Endothelial cell of umbilical vein (primary cell): ENCODE measurements at regions of chr9 and their contacts with region 1.

Region 1: DNA sequence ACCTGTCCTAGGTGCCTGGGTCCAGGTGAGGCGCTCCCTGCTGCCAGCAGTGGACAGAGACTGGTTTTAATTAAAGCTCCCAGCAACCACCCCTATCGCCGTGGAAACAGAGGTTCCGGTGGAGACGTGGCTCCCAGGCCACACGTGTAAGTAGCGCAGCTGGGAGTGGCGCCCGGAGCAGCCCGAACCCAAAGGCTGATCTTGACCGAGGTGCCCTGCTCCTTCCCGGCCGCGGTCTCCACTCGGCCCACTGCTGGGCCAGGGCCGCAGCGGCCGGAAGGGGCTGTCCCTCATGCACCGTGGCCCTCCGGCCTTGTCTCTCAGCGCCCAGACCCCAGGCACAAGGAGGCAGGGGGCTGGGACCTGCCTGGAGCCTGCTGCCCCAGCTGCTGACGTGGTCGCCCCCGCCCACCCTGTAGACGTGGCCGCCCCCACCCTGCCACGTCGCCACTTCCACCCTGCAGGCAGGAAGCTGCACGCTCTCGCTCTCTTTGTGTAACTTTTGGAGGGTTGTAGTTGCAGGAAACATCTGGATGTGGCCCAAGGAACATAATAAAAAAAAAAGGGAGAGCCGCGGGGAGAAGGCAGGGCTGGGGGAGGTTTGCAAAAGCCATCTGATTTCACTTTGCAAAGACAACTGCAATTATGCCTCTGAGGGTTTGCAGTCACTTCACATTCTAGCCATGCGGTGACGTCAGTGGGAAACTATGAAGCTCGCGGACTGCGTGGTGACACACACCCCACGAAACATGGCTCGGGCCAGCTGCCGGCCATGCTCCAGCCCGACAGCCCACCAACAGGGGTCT is 129.9 kb downstream of the RXRA start:
- DNase-seq: peak; percentile 96
- H3K4me3 ChIP-seq: peak overlapping the region in 2 of 3 experiments; percentile 30 to 39
- H3K27ac ChIP-seq: peak overlapping the region; percentile 99
- H3K4me1 ChIP-seq: peaks cover 19% of the 10 kb centered on the region
- H3K27me3 ChIP-seq: no peaks in the 10 kb centered on the region
- CTCF ChIP-seq: no peak
- POLR2A ChIP-seq: no peak

Region 2: DNA sequence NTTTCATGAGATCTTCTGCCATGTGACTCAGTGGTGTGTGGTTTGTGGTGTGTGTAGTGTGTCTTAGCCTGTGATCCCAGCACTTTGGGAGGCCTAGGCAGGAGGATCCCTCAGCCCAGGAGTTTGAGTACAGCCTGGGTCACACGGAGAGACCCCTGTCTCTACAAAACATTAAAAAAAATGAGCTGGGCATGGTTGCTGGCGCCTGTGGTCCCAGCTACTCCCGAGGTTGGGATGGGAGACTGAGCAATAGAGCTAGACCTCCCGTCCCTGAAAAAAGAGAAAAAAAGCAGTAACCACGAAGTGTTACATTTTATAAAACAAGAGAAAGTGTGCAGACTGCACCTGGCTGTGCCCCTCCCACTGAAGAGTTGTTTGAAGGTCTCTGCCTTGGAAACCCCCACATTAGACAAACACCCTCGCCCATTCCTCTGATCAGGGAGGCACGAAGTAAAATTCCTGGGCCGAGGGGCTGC is 270.6 kb before region 1 on chr9:
- CTCF ChIA-PET with region 1: no interaction called
- POLR2A ChIA-PET with region 1: no interaction called
- dilution Hi-C with region 1: no loop called
- intact Hi-C with region 1: no loop called
- DNase-seq: no peak
- H3K4me3 ChIP-seq: no peak overlapping the region
- H3K27ac ChIP-seq: no peak overlapping the region
- H3K4me1 ChIP-seq: no peaks in the 10 kb centered on the region
- H3K27me3 ChIP-seq: peaks cover 3 to 8% of the 10 kb centered on the region in 2 experiments
- CTCF ChIP-seq: no peak
- POLR2A ChIP-seq: no peak

Region 3: DNA sequence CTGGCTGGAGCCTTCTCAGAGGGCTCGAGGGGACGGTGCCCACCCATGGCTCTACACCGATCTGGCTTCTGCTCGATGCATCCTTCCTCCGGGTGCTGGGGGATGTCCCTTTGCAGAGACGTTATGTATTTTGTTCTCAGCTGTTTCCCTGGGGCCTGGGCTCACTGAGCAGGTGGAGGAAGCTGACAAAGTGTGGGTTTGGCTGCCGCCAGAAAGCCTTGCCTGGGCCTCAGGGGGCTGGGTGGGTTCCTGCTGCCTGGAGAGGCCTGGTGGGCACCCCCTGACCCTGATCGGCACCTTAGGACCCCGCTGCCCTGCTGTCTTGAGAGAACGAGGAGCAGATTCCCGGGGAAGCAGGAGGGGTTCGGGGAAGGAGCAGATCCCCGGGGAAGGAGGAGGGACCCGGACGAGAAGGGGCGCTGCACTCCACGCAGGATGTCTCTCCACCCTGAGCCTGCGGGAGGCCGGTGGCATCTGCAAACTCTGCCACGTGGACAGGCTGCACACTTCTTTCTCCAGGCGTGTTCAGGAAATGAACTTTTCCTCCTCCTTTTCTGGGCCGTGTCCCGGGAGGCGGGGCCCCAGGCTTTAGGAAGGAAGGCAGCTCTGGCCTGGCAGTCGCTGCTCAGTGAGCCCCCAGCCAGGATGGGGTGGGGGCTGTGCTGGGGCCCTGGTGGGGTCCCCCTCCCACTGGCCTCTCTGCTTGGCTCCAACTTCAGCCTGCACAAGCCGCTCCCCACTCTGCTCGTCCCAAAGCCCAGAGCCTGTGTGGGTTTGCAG is 19.1 kb after region 1 on chr9:
- CTCF ChIA-PET with region 1: interaction called, 7 read pairs
- POLR2A ChIA-PET with region 1: interaction called, 5 read pairs
- dilution Hi-C with region 1: no loop called
- intact Hi-C with region 1: loop called (anchors 1 kb)
- DNase-seq: peak; percentile 72
- H3K4me3 ChIP-seq: no peak overlapping the region
- H3K27ac ChIP-seq: no peak overlapping the region
- H3K4me1 ChIP-seq: peaks cover 13% of the 10 kb centered on the region
- H3K27me3 ChIP-seq: no peaks in the 10 kb centered on the region
- CTCF ChIP-seq: no peak
- POLR2A ChIP-seq: peak; percentile 62

Region 4: GRCh38 chr9:134551650-134552348 is 95.7 kb after region 1 on chr9:
- CTCF ChIA-PET with region 1: interaction called, 4 read pairs
- POLR2A ChIA-PET with region 1: no interaction called
- dilution Hi-C with region 1: no loop called
- intact Hi-C with region 1: loop called (anchors 1 kb)
- DNase-seq: peak; percentile 73
- H3K4me3 ChIP-seq: no peak overlapping the region
- H3K27ac ChIP-seq: peak overlapping the region; percentile 91
- H3K4me1 ChIP-seq: peaks cover 21% of the 10 kb centered on the region
- H3K27me3 ChIP-seq: no peaks in the 10 kb centered on the region
- CTCF ChIP-seq: no peak
- POLR2A ChIP-seq: no peak

Region 5: GRCh38 chr9:134602547-134603309 is 146.6 kb after region 1 on chr9:
- CTCF ChIA-PET with region 1: no interaction called
- POLR2A ChIA-PET with region 1: no interaction called
- dilution Hi-C with region 1: no loop called
- intact Hi-C with region 1: loop called (anchors 1 kb)
- DNase-seq: peak; percentile 84
- H3K4me3 ChIP-seq: no peak overlapping the region
- H3K27ac ChIP-seq: peak overlapping the region; percentile 97
- H3K4me1 ChIP-seq: peaks cover 19% of the 10 kb centered on the region
- H3K27me3 ChIP-seq: no peaks in the 10 kb centered on the region
- CTCF ChIP-seq: no peak
- POLR2A ChIP-seq: peak; percentile 17

Region 6: DNA sequence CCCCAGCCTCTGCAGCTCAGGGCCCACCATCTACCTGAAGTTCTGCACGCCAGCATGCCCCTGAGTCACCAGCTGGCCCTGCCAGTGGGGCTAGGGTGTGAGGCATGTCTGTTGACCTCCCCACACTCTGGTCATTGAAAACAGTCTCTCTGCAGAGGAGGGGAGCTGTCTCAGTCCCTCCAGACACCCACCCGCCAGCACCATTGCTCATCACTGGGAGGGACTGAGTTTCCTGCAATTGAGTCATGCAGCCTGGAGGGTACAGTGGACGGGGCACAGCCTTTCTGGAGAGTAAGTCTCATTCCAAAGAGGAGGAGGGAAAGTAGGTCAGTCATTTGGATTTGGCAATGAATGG is 168.7 kb after region 1 on chr9:
- CTCF ChIA-PET with region 1: no interaction called
- POLR2A ChIA-PET with region 1: no interaction called
- dilution Hi-C with region 1: no loop called
- intact Hi-C with region 1: loop called (anchors 1 kb)
- DNase-seq: peak; percentile 42
- H3K4me3 ChIP-seq: no peak overlapping the region
- H3K27ac ChIP-seq: peak overlapping the region; percentile 60
- H3K4me1 ChIP-seq: peaks cover 29% of the 10 kb centered on the region
- H3K27me3 ChIP-seq: no peaks in the 10 kb centered on the region
- CTCF ChIP-seq: no peak
- POLR2A ChIP-seq: peak; percentile 31

Region 7: GRCh38 chr9:134641173-134641985 is 185.2 kb after region 1 on chr9 and contains the start of gene COL5A1:
- CTCF ChIA-PET with region 1: interaction called, 9 read pairs
- POLR2A ChIA-PET with region 1: interaction called, 3 read pairs
- dilution Hi-C with region 1: no loop called
- intact Hi-C with region 1: loop called (anchors 1 kb)
- DNase-seq: peak; percentile 93
- H3K4me3 ChIP-seq: peak within 1 kb of the TSS; percentile 80 to 83 (median 80)
- H3K27ac ChIP-seq: peak within 1 kb of the TSS; percentile 67
- H3K4me1 ChIP-seq: peaks cover 28% of the 10 kb centered on the region
- H3K27me3 ChIP-seq: no peaks in the 10 kb centered on the region
- CTCF ChIP-seq: peak in 1 of 2 donors; percentile 23
- POLR2A ChIP-seq: peak; percentile 79
- total RNA-seq, gene COL5A1: 164 and 175 TPM in 2 replicates

Region 8: GRCh38 chr9:135077497-135078200 is 621.5 kb after region 1 on chr9:
- CTCF ChIA-PET with region 1: no interaction called
- POLR2A ChIA-PET with region 1: no interaction called
- dilution Hi-C with region 1: no loop called
- intact Hi-C with region 1: loop called (anchors 5 kb)
- DNase-seq: peak; percentile 7
- H3K4me3 ChIP-seq: no peak overlapping the region
- H3K27ac ChIP-seq: no peak overlapping the region
- H3K4me1 ChIP-seq: no peaks in the 10 kb centered on the region
- H3K27me3 ChIP-seq: peaks cover 0 to 9% of the 10 kb centered on the region in 2 experiments
- CTCF ChIP-seq: no peak
- POLR2A ChIP-seq: no peak